ENCODE measurements at regions of chr11 and their contacts with region 1.

Region 1: DNA sequence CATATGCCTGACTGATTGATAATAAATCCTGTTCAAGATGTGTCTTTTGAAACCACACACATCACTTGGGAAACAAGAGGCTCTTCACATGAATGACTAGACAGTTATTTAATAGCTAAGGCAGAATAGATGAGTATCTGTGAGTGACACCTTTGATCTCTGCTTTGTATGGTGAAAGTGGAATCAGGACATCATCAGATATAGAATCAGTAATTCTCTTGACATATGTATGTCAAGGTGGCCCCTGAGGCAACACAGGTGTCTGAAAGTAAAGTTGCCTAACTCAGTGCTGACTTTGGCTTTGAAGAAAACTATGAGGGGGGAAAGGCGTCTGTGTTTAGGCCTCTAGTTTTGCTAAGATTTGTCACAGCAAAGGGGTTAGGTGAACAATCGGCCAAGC is 11.5 kb upstream of the CASP4 start:
- DNase-seq: no peak
- H3K4me3 ChIP-seq: no peak overlapping the region
- H3K4me3 Mint-ChIP-seq: no peak overlapping the region
- H3K27ac Mint-ChIP-seq: no peak overlapping the region
- H3K4me1 ChIP-seq: peaks cover 4% of the 10 kb centered on the region
- H3K4me1 Mint-ChIP-seq: peaks cover 15% of the 10 kb centered on the region
- H3K27me3 ChIP-seq: no peaks in the 10 kb centered on the region
- H3K27me3 Mint-ChIP-seq: no peaks in the 10 kb centered on the region
- CTCF ChIP-seq: no peak

Region 2: DNA sequence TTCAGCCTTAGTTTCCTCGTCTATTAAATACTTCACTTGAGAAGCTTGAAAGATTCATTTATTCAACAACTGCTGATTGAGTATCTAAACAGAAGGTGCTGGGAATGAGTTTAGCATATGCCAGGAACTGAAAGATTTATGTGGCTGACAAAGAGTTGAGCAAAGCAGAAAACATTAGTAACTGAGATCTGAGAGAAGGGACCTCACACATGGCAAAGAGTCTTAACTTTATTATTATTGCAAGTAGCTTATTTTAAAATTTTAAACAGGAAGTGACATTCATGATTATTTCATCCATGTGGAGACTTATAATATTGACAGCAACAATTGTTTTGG is 215.2 kb before region 1 on chr11:
- CTCF ChIA-PET with region 1: no interaction called
- POLR2A ChIA-PET with region 1: interaction called, 17 read pairs
- intact Hi-C with region 1: no loop called
- DNase-seq: no peak
- H3K4me3 ChIP-seq: no peak overlapping the region
- H3K4me3 Mint-ChIP-seq: no peak overlapping the region
- H3K27ac Mint-ChIP-seq: no peak overlapping the region
- H3K4me1 ChIP-seq: no peaks in the 10 kb centered on the region
- H3K4me1 Mint-ChIP-seq: no peaks in the 10 kb centered on the region
- H3K27me3 ChIP-seq: no peaks in the 10 kb centered on the region
- H3K27me3 Mint-ChIP-seq: peaks cover 3% of the 10 kb centered on the region
- CTCF ChIP-seq: no peak

Region 3: DNA sequence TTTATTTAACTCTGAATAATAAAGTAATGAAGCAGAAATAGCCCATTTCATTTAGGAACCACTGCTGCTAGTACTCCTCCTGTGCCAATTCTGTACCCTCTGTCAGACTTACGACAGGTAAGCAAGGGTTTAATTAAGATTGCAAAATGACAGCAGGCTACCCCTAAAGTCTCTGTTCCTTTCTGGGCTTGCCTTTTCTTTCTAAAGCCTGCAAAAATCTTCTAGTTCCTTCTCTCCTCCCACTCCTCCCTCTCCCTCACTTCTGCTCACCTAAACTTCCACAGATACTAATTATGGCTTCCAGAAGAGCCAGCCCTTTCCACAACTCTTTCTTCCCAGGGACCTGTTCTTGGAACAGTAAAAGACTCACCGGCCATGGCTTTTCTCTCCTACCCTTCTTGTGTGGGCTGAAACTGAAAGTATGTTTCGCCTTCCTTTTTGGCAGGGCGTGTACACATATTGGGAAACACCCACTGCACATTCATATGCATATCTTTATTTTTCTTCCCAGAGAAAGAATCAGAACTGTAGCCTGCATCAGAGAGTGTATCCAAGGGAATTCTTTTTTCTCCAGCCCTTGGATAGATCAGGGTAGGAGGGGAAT is 65.2 kb after region 1 on chr11 and contains the start of gene CARD16:
- CTCF ChIA-PET with region 1: no interaction called
- POLR2A ChIA-PET with region 1: no interaction called
- intact Hi-C with region 1: no loop called
- DNase-seq: no peak
- H3K4me3 ChIP-seq: no peak within 1 kb of the TSS
- H3K4me3 Mint-ChIP-seq: no peak within 1 kb of the TSS
- H3K27ac Mint-ChIP-seq: peak within 1 kb of the TSS; percentile 56
- H3K4me1 ChIP-seq: peaks cover 42% of the 10 kb centered on the region
- H3K4me1 Mint-ChIP-seq: peaks cover 66% of the 10 kb centered on the region
- H3K27me3 ChIP-seq: no peaks in the 10 kb centered on the region
- H3K27me3 Mint-ChIP-seq: no peaks in the 10 kb centered on the region
- CTCF ChIP-seq: no peak
- total RNA-seq, gene CARD16: 0.77 and 1.5 TPM in 2 replicates

Measured in Caco-2 (cell line).